B cell (primary cell): ENCODE measurements at regions of chr4 and their contacts with region 1.

Region 1: DNA sequence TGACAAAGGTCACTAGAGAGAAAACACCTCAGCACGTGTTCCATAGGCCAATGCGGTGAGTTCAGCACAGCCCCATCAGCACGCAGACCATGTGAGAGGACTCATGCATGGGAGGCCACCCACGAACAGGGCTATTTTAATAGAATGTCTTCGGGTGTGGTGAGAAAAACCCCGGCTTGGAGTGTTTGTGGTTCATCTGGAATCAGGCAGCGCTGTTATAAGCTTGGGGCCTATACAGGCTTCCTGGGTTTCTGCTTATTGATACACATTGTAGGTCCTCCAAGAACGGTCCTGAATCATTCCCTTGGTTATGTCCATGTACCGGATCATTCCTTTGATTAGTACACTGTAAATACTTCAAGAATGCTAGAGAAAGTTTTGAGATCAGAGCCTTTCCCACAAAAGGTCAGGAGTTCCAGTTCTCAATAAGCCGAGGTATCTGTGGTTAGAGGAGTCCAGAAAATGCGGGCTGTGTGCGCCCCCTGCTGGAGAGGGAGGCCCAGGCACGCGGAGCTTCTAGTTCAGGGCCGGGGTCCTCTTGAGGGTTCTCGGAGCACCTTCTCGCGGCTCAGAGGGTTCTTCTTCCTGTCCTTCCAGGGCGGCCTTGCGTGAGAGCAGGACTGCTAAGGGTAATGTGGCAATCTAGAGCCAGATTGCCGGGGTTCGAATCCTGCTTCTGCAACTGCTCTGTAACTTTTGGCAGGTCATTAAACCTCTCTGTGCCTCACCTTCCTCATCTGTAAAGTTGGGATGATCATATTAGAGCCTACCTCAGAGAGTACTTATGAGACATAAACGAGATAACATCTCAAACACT is 51.8 kb downstream of the TLR10 start:
- DNase-seq: peak; percentile 88
- ATAC-seq: peak; percentile 83
- H3K4me3 ChIP-seq: peak overlapping the region in 1 of 5 experiments; percentile 10
- H3K4me3 Mint-ChIP-seq: peak overlapping the region; percentile 69
- H3K27ac ChIP-seq: peak overlapping the region; percentile 32 to 40
- H3K27ac Mint-ChIP-seq: peak overlapping the region; percentile 75
- H3K4me1 ChIP-seq: peaks cover 13 to 27% of the 10 kb centered on the region in 2 donors
- H3K4me1 Mint-ChIP-seq: peaks cover 33% of the 10 kb centered on the region
- H3K27me3 ChIP-seq: no peaks in the 10 kb centered on the region
- H3K27me3 Mint-ChIP-seq: no peaks in the 10 kb centered on the region
- CTCF ChIP-seq: peak; percentile 92

Region 2: DNA sequence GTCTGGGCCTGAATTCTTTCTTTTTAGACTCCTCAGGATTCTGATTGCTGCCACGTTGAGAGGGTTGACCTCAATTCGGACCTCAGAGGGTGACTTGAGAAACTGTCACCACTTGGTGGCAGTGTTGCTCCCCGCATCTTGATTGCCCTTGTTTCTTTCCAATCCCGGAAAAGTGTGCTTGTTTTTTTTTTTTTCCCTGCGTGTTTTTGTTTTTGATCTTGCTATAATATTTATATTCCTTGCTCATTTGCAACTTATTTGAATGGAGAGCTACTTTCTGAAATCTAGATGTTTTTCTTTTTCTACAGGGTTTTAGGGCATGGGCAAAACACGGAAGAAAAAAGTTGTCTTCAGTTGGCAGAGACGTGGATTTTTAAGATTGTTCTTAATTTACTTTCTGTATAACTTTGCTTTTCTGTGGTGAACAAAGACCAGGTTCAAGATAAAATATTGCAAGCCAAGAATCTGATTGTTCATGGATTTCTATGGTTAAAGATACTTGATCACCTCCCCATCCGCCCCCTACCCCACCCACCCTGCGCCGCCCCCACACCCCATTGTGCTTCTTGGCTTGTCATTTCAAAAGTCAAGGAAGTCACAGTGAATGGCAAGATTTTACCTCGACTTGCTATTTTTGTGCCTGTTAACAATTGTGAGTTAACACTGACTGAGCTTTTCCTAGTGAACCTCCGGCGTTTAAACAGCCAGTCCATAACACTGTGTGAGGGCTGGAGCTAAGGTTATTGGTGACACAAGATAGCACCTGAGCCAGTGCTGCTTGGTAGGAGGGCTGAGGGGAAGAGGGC is 668.7 kb before region 1 on chr4:
- CTCF ChIA-PET with region 1: interaction called, 19 read pairs
- POLR2A ChIA-PET with region 1: no interaction called
- intact Hi-C with region 1: loop called (anchors 1 kb)
- DNase-seq: peak; percentile 65
- ATAC-seq: peak; percentile 62
- H3K4me3 ChIP-seq: no peak overlapping the region
- H3K4me3 Mint-ChIP-seq: peak overlapping the region; percentile 51
- H3K27ac ChIP-seq: no peak overlapping the region
- H3K27ac Mint-ChIP-seq: peak overlapping the region; percentile 42
- H3K4me1 ChIP-seq: peaks cover 0 to 5% of the 10 kb centered on the region in 2 donors
- H3K4me1 Mint-ChIP-seq: peaks cover 15% of the 10 kb centered on the region
- H3K27me3 ChIP-seq: no peaks in the 10 kb centered on the region
- H3K27me3 Mint-ChIP-seq: no peaks in the 10 kb centered on the region
- CTCF ChIP-seq: peak; percentile 93